Common myeloid progenitor, CD34-positive (primary cell): ENCODE measurements at regions of chr6 and their contacts with region 1.

Region 1: DNA sequence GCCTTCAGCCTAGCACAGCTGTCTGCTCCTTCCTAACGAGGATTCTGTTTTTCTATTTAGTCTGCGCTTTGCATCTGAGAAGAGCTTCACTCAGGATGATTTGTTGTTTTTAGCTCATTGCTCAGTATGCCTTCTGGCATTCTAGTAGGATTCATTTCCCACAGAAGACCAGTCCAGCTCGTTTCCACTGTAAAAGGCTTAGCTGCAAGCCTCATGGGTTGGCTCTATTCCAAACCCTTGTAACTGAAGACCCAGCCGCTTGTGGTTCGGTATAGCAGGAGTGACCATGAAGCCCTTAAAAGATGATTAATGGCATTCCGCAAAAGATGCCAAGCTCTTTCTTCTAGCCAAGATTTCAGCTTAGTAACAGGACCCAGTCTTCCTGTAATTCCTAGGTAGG is 7.2 kb downstream of the ADGRF1 start:
- DNase-seq: peak; percentile 29 to 84 (median 78)
- H3K4me3 ChIP-seq: peak overlapping the region in 4 of 7 experiments; percentile 12 to 51 (median 18)
- H3K27ac ChIP-seq: no peak overlapping the region
- H3K4me1 ChIP-seq: peaks cover 11 to 31% (median 22%) of the 10 kb centered on the region in 4 experiments
- H3K27me3 ChIP-seq: no peaks in the 10 kb centered on the region

Region 2: DNA sequence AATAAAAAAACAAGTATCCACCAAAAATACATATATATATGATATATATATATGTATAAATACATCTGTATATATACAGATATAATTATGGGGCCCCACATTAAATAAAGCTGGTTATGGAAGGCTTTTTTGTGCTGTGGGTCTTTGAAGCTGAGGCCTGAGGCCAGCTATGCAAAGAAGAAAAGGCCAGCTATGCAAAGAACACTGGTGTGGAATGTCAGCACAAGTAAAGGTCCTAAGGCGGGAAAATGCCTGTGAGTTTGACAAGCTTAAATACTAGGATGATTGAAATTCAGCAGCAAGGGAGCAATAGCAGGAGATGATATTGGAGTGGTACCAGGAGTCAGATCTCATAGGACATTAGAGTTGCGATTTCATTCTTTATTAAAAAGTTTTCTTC is 18.0 kb before region 1 on chr6:
- CTCF ChIA-PET with region 1: interaction called, 10 read pairs
- POLR2A ChIA-PET with region 1: no interaction called
- DNase-seq: no peak
- H3K4me3 ChIP-seq: no peak overlapping the region
- H3K27ac ChIP-seq: no peak overlapping the region
- H3K4me1 ChIP-seq: peaks cover 0 to 22% (median 4%) of the 10 kb centered on the region in 4 experiments
- H3K27me3 ChIP-seq: no peaks in the 10 kb centered on the region